ENCODE measurements at regions of chr2 and their contacts with region 1.

Region 1: DNA sequence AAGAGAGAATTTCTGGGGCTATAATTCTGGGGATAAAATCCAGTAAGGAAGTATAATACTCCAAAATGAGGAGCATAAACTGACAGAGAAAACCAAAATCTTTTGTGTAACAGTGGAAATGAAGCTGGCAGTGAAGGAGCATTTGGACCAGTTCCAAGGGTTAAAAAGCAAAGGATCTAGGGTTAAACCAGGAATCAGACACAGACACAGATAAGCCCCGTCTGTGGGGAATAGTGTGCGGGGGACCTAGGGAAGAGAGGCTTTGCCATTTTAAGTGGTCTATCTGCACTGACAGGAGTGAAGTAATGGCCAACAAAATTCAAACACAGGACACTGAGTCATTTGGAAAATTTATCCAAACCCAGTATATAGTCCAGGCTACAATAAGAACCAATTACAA is 23.4 kb downstream of the SAP130 start:
- DNase-seq: no peak
- H3K4me3 Mint-ChIP-seq: no peak overlapping the region
- H3K27ac Mint-ChIP-seq: no peak overlapping the region
- H3K4me1 Mint-ChIP-seq: no peaks in the 10 kb centered on the region
- H3K27me3 Mint-ChIP-seq: no peaks in the 10 kb centered on the region
- CTCF ChIP-seq: no peak

Region 2: GRCh38 chr2:127984213-127984950 is 20.1 kb before region 1 on chr2:
- CTCF ChIA-PET with region 1: interaction called, 11 read pairs
- intact Hi-C with region 1: no loop called
- DNase-seq: no peak
- H3K4me3 Mint-ChIP-seq: no peak overlapping the region
- H3K27ac Mint-ChIP-seq: no peak overlapping the region
- H3K4me1 Mint-ChIP-seq: no peaks in the 10 kb centered on the region
- H3K27me3 Mint-ChIP-seq: no peaks in the 10 kb centered on the region
- CTCF ChIP-seq: no peak

Region 3: DNA sequence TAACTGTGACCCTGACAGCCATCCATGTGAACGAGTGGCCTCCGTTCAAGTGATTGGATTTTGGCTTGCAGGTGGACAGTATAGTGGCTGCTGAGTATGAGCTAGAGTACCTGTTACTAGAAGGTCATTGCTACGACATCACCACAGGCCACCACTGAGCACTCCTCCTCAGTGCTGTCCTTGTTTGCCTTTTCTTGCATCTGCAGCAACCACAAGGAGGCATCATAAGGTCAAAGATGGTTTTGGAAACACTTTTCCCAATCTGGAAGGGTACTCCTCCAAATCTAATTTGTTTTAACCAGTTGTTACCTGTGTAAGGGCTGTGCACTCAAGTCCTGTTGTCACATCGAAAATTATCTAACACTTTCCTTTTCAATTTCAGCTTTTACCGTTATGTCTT is 167.7 kb after region 1 on chr2:
- CTCF ChIA-PET with region 1: no interaction called
- intact Hi-C with region 1: no loop called
- DNase-seq: peak; percentile 3
- H3K4me3 Mint-ChIP-seq: no peak overlapping the region
- H3K27ac Mint-ChIP-seq: no peak overlapping the region
- H3K4me1 Mint-ChIP-seq: no peaks in the 10 kb centered on the region
- H3K27me3 Mint-ChIP-seq: no peaks in the 10 kb centered on the region
- CTCF ChIP-seq: no peak